WTC11 (cell line): ENCODE measurements at regions of chr2 and their contacts with region 1.

Region 1: DNA sequence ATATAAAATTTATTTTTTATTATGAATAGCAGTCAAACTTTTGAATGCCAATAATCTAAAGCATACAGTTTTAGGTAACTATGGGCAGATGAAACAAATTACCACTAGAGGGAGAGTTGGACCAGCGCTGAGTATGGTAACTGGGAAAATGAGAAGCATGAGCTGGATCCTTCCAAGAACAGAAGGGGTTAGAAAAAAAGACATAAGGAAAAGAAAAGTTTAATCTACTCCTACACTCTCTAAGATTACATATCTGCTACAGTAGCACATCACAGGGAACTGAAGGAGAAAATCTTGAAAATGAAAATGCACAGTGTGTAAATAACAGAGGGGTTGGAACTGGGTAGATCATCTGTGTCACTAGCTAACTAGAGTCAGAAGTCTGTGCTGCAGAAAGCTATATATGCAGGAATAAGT is 15.5 kb downstream of the REG3G start:
- DNase-seq: no peak
- ATAC-seq: peak; percentile 92
- H3K4me3 Mint-ChIP-seq: no peak overlapping the region
- H3K27ac Mint-ChIP-seq: no peak overlapping the region
- H3K4me1 Mint-ChIP-seq: peaks cover 6% of the 10 kb centered on the region
- H3K27me3 Mint-ChIP-seq: no peaks in the 10 kb centered on the region
- CTCF ChIP-seq: peak; percentile 54

Region 2: DNA sequence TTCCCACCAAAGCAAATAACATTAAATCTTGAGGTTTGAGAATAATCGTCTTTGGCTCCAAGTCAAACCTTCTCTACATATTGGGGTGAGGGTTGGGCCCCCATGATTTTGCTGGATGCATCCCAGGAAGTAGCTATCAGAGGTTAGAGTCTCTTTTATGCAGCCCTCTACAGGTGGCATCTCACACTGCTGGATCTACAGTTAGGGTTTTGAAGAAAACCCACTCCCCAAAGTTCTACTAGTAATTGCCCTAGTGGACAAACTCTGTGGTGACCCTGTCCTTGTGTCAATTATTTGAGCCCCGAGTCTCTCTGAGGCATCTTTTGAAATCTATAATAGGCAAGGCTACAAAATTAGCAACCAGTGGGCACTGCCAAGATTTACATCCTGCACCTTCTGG is 64.2 kb after region 1 on chr2:
- CTCF ChIA-PET with region 1: interaction called, 13 read pairs
- POLR2A ChIA-PET with region 1: no interaction called
- DNase-seq: no peak
- ATAC-seq: peak; percentile 63
- H3K4me3 Mint-ChIP-seq: no peak overlapping the region
- H3K27ac Mint-ChIP-seq: no peak overlapping the region
- H3K4me1 Mint-ChIP-seq: no peaks in the 10 kb centered on the region
- H3K27me3 Mint-ChIP-seq: peaks cover 2% of the 10 kb centered on the region; the same call in 1 of the 2 replicates
- CTCF ChIP-seq: no peak

Region 3: GRCh38 chr2:79200762-79201161 is 159.7 kb after region 1 on chr2:
- CTCF ChIA-PET with region 1: interaction called, 20 read pairs
- POLR2A ChIA-PET with region 1: no interaction called
- DNase-seq: no peak
- ATAC-seq: peak; percentile 34; the same call in 1 of the 2 replicates
- H3K4me3 Mint-ChIP-seq: peak overlapping the region; percentile 24; the same call in 1 of the 2 replicates
- H3K27ac Mint-ChIP-seq: peak overlapping the region; percentile 81
- H3K4me1 Mint-ChIP-seq: peaks cover 42% of the 10 kb centered on the region
- H3K27me3 Mint-ChIP-seq: no peaks in the 10 kb centered on the region
- CTCF ChIP-seq: no peak

Region 4: GRCh38 chr2:79219383-79219988 is 178.4 kb after region 1 on chr2:
- CTCF ChIA-PET with region 1: interaction called, 20 read pairs
- POLR2A ChIA-PET with region 1: no interaction called
- DNase-seq: peak; percentile 56
- ATAC-seq: peak; percentile 53
- H3K4me3 Mint-ChIP-seq: no peak overlapping the region
- H3K27ac Mint-ChIP-seq: no peak overlapping the region
- H3K4me1 Mint-ChIP-seq: 0 out of 2 replicates have a peak, but pooled peaks cover 3% of the 10 kb centered on the region
- H3K27me3 Mint-ChIP-seq: no peaks in the 10 kb centered on the region; the same call in 1 of the 2 replicates
- CTCF ChIP-seq: peak; percentile 57

Region 5: DNA sequence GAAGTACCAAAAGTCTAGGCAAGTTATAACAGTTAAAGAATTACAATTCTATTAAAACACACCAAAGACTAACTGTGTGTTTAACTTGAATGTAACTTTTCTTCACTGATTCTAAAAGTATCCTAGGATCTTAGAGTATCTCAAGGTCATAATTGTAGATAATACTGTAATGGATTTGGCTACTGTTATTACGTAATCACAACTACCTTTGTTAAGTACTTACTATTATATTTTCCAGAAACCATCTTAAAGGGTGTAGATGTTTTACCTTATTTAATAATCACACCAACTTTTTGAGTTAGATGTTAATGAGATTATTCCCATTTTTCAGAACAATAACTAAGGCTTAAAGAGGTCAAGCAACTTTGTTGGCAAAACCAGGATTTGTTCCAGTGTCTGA is 279.8 kb after region 1 on chr2:
- CTCF ChIA-PET with region 1: no interaction called
- POLR2A ChIA-PET with region 1: no interaction called
- DNase-seq: no peak
- ATAC-seq: no peak
- H3K4me3 Mint-ChIP-seq: no peak overlapping the region
- H3K27ac Mint-ChIP-seq: no peak overlapping the region
- H3K4me1 Mint-ChIP-seq: 0 out of 2 replicates have a peak, but pooled peaks cover 7% of the 10 kb centered on the region
- H3K27me3 Mint-ChIP-seq: no peaks in the 10 kb centered on the region; the same call in 1 of the 2 replicates
- CTCF ChIP-seq: no peak

Region 6: GRCh38 chr2:79887747-79888374 is 846.8 kb after region 1 on chr2:
- CTCF ChIA-PET with region 1: interaction called, 12 read pairs
- POLR2A ChIA-PET with region 1: no interaction called
- DNase-seq: peak; percentile 26
- ATAC-seq: peak; percentile 74
- H3K4me3 Mint-ChIP-seq: no peak overlapping the region
- H3K27ac Mint-ChIP-seq: 0 out of 2 replicates have a peak overlapping the region, but pooled peaks have one; percentile 22
- H3K4me1 Mint-ChIP-seq: peaks cover 23% of the 10 kb centered on the region
- H3K27me3 Mint-ChIP-seq: no peaks in the 10 kb centered on the region
- CTCF ChIP-seq: peak; percentile 67